CD8-positive, alpha-beta T cell (primary cell): ENCODE measurements at regions of chr19 and their contacts with region 1.

Region 1: DNA sequence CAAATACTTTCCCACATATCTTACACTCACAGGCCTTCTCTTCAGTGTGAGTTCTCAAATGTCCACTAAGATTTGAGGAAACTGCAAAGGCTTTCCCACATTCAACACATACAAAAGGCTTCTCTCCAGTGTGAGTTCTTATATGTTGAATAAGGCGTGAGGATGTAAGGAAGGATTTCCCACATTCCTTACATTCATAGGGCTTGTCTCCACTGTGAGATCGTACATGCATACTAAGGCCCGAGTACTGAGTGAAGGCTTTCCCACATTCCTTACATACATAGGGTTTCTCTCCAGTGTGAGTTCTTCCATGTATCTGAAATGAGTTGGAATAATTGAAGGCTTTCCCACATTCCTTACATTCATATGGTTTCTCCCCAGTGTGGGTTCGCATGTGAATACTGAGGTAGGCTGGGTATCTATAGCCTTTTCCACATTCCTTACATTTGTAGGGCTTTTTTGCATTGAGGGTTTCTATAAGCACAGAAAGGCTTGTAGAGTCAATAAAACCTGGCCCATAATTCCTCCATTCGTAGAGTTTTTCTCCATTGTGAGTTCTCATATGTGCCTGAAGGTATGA is 9.6 kb downstream of the ZNF426 start:
- DNase-seq: no peak
- ATAC-seq: no peak
- H3K4me3 ChIP-seq: peak overlapping the region in 1 of 2 experiments; percentile 1
- H3K4me3 Mint-ChIP-seq: no peak overlapping the region
- H3K27ac ChIP-seq: no peak overlapping the region
- H3K27ac Mint-ChIP-seq: no peak overlapping the region
- H3K4me1 ChIP-seq: no peaks in the 10 kb centered on the region
- H3K4me1 Mint-ChIP-seq: no peaks in the 10 kb centered on the region
- H3K27me3 ChIP-seq: no peaks in the 10 kb centered on the region
- H3K27me3 Mint-ChIP-seq: no peaks in the 10 kb centered on the region
- CTCF ChIP-seq: no peak

Region 2: DNA sequence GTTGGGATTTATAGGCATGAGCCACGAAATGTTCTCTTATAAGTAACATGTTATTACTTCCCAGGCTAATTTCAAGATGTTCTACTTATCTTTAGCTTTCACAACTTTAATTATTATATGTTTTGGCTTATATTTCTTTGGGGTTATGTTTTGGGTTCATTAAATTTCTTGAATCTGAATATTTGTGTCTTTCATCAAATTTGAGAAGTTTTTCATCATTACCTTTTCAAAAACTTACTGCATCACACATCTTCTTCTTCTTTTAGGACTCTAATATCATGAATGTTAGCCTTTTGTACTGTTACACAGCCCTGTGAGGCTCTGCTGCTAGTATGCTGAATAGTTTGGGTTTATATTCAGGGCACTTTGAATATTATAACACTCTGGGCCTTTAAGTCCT is 83.8 kb before region 1 on chr19:
- CTCF ChIA-PET with region 1: no interaction called
- POLR2A ChIA-PET with region 1: no interaction called
- intact Hi-C with region 1: no loop called
- DNase-seq: no peak
- ATAC-seq: no peak
- H3K4me3 ChIP-seq: no peak overlapping the region
- H3K4me3 Mint-ChIP-seq: no peak overlapping the region
- H3K27ac ChIP-seq: no peak overlapping the region
- H3K27ac Mint-ChIP-seq: no peak overlapping the region
- H3K4me1 ChIP-seq: no peaks in the 10 kb centered on the region
- H3K4me1 Mint-ChIP-seq: peaks cover 2% of the 10 kb centered on the region
- H3K27me3 ChIP-seq: no peaks in the 10 kb centered on the region
- H3K27me3 Mint-ChIP-seq: no peaks in the 10 kb centered on the region
- CTCF ChIP-seq: no peak

Region 3: DNA sequence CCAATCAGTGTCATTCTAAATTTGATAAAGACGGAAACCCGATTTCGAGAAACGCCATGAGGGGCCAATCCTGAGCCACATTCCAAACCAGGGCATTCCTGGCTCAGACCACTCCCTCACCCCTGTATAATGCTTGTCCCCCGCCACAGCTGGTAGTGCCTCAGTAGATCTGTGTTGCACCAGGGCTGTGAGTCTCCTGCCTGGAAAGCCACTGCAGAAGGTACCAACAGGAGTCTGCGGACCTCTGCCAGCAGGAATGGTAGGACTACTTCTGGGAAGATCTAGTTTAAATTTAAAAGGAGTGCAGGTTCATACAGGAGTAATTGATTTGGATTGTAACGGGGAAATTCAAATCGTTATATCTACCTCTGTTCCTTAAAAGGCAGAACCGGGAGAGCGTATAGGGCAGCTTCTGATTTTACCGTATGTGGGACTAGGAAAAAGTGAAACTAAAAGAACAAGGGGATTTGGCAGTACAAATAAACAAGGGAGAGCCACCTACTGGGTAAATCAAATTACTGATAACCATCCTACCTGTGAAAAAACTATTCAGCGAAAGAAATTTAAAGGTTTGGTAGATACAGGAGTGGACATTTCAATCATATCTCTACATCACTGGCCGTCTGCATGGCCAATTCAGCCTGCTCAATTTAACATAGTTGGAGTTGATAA is 72.7 kb before region 1 on chr19:
- CTCF ChIA-PET with region 1: no interaction called
- POLR2A ChIA-PET with region 1: no interaction called
- intact Hi-C with region 1: no loop called
- DNase-seq: peak in 1 of 9 experiments; percentile 3
- ATAC-seq: no peak
- H3K4me3 ChIP-seq: no peak overlapping the region
- H3K4me3 Mint-ChIP-seq: no peak overlapping the region
- H3K27ac ChIP-seq: no peak overlapping the region
- H3K27ac Mint-ChIP-seq: no peak overlapping the region
- H3K4me1 ChIP-seq: no peaks in the 10 kb centered on the region
- H3K4me1 Mint-ChIP-seq: no peaks in the 10 kb centered on the region
- H3K27me3 ChIP-seq: no peaks in the 10 kb centered on the region
- H3K27me3 Mint-ChIP-seq: no peaks in the 10 kb centered on the region
- CTCF ChIP-seq: no peak

Region 4: GRCh38 chr19:9474975-9475374 is 53.9 kb before region 1 on chr19:
- CTCF ChIA-PET with region 1: no interaction called
- POLR2A ChIA-PET with region 1: no interaction called
- intact Hi-C with region 1: no loop called
- DNase-seq: no peak
- ATAC-seq: no peak
- H3K4me3 ChIP-seq: no peak overlapping the region
- H3K4me3 Mint-ChIP-seq: no peak overlapping the region
- H3K27ac ChIP-seq: no peak overlapping the region
- H3K27ac Mint-ChIP-seq: no peak overlapping the region
- H3K4me1 ChIP-seq: no peaks in the 10 kb centered on the region
- H3K4me1 Mint-ChIP-seq: no peaks in the 10 kb centered on the region
- H3K27me3 ChIP-seq: peaks cover 0 to 3% of the 10 kb centered on the region in 2 experiments
- H3K27me3 Mint-ChIP-seq: no peaks in the 10 kb centered on the region
- CTCF ChIP-seq: no peak

Region 5: DNA sequence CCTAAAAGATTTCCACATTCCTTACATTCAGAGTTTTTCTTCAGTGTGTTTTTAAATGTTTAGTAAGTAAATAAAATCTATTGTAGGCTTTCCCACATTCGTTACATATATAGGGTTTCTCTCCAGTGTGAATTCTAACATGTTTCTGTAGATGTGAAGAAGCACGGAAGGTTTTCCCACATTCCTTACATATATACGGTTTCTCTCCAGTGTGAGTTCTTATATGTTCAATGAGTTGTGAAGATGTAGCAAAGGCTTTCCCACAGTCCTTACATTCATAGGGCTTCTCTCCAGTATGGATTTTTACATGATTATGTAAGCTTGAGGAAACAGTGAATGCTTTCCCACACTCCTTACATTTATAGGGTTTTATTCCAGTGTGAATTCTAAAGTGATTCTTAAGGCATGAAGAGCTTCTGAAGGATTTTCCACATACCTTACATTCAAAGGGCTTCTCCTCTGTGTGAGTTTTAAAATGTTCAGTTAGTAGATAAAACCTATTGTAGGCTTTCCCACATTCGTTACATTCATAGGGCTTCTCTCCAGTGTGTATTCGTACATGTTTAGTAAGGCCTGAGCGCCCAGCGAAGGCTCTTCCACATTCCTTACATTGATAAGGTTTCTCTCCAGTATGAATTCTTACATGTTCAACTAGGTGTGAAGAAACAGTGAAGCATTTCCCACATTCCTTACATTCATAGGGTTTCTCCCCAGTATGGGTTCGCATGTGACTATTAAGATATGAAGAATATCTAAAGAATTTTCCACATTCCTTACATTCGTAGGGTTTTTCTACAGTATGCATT is 37.3 kb after region 1 on chr19:
- CTCF ChIA-PET with region 1: no interaction called
- POLR2A ChIA-PET with region 1: interaction called, 5 read pairs
- intact Hi-C with region 1: loop called in 1 of 2 experiments (anchors 5 kb)
- DNase-seq: no peak
- ATAC-seq: no peak
- H3K4me3 ChIP-seq: no peak overlapping the region
- H3K4me3 Mint-ChIP-seq: no peak overlapping the region
- H3K27ac ChIP-seq: no peak overlapping the region
- H3K27ac Mint-ChIP-seq: no peak overlapping the region
- H3K4me1 ChIP-seq: no peaks in the 10 kb centered on the region
- H3K4me1 Mint-ChIP-seq: peaks cover under 1% of the 10 kb centered on the region
- H3K27me3 ChIP-seq: no peaks in the 10 kb centered on the region
- H3K27me3 Mint-ChIP-seq: no peaks in the 10 kb centered on the region
- CTCF ChIP-seq: no peak